Activated B cell treated with CpG ODN at 0.5 μM for 24 hours (primary cell): ENCODE measurements at regions of chr22 and their contacts with region 1.

Region 1: GRCh38 chr22:40044102-40044869 is 49.5 kb downstream of the FAM83F start:
- DNase-seq: peak; percentile 94
- ATAC-seq: peak; percentile 85
- H3K4me3 Mint-ChIP-seq: peak overlapping the region; percentile 90
- H3K27ac Mint-ChIP-seq: peak overlapping the region; percentile 99
- H3K4me1 Mint-ChIP-seq: peaks cover 48% of the 10 kb centered on the region
- H3K27me3 Mint-ChIP-seq: peaks cover 12% of the 10 kb centered on the region
- CTCF ChIP-seq: no peak

Region 2: GRCh38 chr22:38705235-38706100 is 1338.8 kb before region 1 on chr22 and contains the start of gene GTPBP1:
- CTCF ChIA-PET with region 1: no interaction called
- POLR2A ChIA-PET with region 1: interaction called, 3 read pairs
- intact Hi-C with region 1: loop called (anchors 10 kb)
- DNase-seq: peak; percentile 82
- ATAC-seq: peak; percentile 79
- H3K4me3 Mint-ChIP-seq: peak within 1 kb of the TSS; percentile 88
- H3K27ac Mint-ChIP-seq: peak within 1 kb of the TSS; percentile 85
- H3K4me1 Mint-ChIP-seq: peaks cover 69% of the 10 kb centered on the region
- H3K27me3 Mint-ChIP-seq: no peaks in the 10 kb centered on the region
- CTCF ChIP-seq: no peak
- total RNA-seq, gene GTPBP1: 90.6 and 103 TPM in 2 replicates

Region 3: GRCh38 chr22:39502109-39502788 is 542.0 kb before region 1 on chr22 and contains the start of gene MIEF1:
- CTCF ChIA-PET with region 1: no interaction called
- POLR2A ChIA-PET with region 1: interaction called, 12 read pairs
- intact Hi-C with region 1: no loop called
- DNase-seq: peak; percentile 89
- ATAC-seq: peak; percentile 96
- H3K4me3 Mint-ChIP-seq: peak within 1 kb of the TSS; percentile 95
- H3K27ac Mint-ChIP-seq: peak within 1 kb of the TSS; percentile 89
- H3K4me1 Mint-ChIP-seq: peaks cover 34% of the 10 kb centered on the region
- H3K27me3 Mint-ChIP-seq: no peaks in the 10 kb centered on the region
- CTCF ChIP-seq: no peak
- total RNA-seq, gene MIEF1: 38.2 and 41.3 TPM in 2 replicates

Region 4: GRCh38 chr22:39690881-39691605 is 353.2 kb before region 1 on chr22:
- CTCF ChIA-PET with region 1: no interaction called
- POLR2A ChIA-PET with region 1: no interaction called
- intact Hi-C with region 1: no loop called
- DNase-seq: no peak
- ATAC-seq: peak; percentile 25
- H3K4me3 Mint-ChIP-seq: peak overlapping the region; percentile 4
- H3K27ac Mint-ChIP-seq: no peak overlapping the region
- H3K4me1 Mint-ChIP-seq: peaks cover 12% of the 10 kb centered on the region
- H3K27me3 Mint-ChIP-seq: peaks cover 47% of the 10 kb centered on the region
- CTCF ChIP-seq: no peak

Region 5: GRCh38 chr22:39960791-39961746 is 83.2 kb before region 1 on chr22:
- CTCF ChIA-PET with region 1: no interaction called
- POLR2A ChIA-PET with region 1: no interaction called
- intact Hi-C with region 1: no loop called
- DNase-seq: no peak
- ATAC-seq: peak; percentile 70
- H3K4me3 Mint-ChIP-seq: no peak overlapping the region
- H3K27ac Mint-ChIP-seq: no peak overlapping the region
- H3K4me1 Mint-ChIP-seq: peaks cover 32% of the 10 kb centered on the region
- H3K27me3 Mint-ChIP-seq: peaks cover 10% of the 10 kb centered on the region
- CTCF ChIP-seq: no peak

Region 6: GRCh38 chr22:40009292-40009769 is 35.0 kb before region 1 on chr22:
- CTCF ChIA-PET with region 1: no interaction called
- POLR2A ChIA-PET with region 1: no interaction called
- intact Hi-C with region 1: no loop called
- DNase-seq: no peak
- ATAC-seq: no peak
- H3K4me3 Mint-ChIP-seq: no peak overlapping the region
- H3K27ac Mint-ChIP-seq: no peak overlapping the region
- H3K4me1 Mint-ChIP-seq: no peaks in the 10 kb centered on the region
- H3K27me3 Mint-ChIP-seq: peaks cover 51% of the 10 kb centered on the region
- CTCF ChIP-seq: no peak

Region 7: DNA sequence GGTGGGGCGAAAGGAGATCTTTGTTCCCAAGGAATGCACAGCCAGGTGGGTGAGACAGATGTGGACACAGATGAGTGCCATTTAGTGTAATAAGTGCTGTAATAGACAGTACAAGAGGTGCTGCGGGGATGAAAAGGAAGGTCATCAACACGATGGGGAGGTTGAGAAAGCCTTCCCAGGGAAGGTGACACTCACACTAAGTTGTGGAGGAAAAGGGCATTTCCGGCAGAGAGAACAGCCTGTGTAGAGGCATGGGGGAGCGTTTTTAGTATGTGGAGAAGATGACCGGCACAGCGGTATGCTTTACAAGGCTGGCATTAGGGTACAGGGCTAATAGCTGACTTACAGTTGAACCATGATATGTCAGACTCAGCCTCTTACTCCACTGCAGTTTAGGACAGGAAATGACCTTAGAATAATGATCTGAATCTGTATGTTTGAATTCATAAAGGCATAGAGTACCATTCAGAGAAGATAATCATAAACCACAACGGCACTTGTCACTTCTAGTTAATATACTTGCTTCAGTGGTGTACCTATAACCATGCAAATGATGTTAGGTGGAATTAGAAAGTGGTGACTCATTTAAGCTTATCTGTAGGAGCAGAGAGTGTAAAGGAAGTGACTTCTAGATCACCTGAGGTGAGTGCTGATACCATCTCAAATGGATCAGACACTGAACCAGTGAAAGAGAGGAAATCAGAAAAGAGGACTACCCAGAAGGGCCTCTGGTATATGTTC is 11.0 kb after region 1 on chr22:
- CTCF ChIA-PET with region 1: no interaction called
- POLR2A ChIA-PET with region 1: interaction called, 64 read pairs
- intact Hi-C with region 1: no loop called
- DNase-seq: no peak
- ATAC-seq: peak; percentile 84
- H3K4me3 Mint-ChIP-seq: peak overlapping the region; percentile 53
- H3K27ac Mint-ChIP-seq: peak overlapping the region; percentile 85
- H3K4me1 Mint-ChIP-seq: peaks cover 83% of the 10 kb centered on the region
- H3K27me3 Mint-ChIP-seq: no peaks in the 10 kb centered on the region
- CTCF ChIP-seq: no peak

Region 8: GRCh38 chr22:40107851-40108378 is 63.6 kb after region 1 on chr22:
- CTCF ChIA-PET with region 1: no interaction called
- POLR2A ChIA-PET with region 1: interaction called, 15 read pairs
- intact Hi-C with region 1: no loop called
- DNase-seq: no peak
- ATAC-seq: peak; percentile 49
- H3K4me3 Mint-ChIP-seq: peak overlapping the region; percentile 46
- H3K27ac Mint-ChIP-seq: peak overlapping the region; percentile 8
- H3K4me1 Mint-ChIP-seq: peaks cover 81% of the 10 kb centered on the region
- H3K27me3 Mint-ChIP-seq: no peaks in the 10 kb centered on the region
- CTCF ChIP-seq: no peak

Region 9: DNA sequence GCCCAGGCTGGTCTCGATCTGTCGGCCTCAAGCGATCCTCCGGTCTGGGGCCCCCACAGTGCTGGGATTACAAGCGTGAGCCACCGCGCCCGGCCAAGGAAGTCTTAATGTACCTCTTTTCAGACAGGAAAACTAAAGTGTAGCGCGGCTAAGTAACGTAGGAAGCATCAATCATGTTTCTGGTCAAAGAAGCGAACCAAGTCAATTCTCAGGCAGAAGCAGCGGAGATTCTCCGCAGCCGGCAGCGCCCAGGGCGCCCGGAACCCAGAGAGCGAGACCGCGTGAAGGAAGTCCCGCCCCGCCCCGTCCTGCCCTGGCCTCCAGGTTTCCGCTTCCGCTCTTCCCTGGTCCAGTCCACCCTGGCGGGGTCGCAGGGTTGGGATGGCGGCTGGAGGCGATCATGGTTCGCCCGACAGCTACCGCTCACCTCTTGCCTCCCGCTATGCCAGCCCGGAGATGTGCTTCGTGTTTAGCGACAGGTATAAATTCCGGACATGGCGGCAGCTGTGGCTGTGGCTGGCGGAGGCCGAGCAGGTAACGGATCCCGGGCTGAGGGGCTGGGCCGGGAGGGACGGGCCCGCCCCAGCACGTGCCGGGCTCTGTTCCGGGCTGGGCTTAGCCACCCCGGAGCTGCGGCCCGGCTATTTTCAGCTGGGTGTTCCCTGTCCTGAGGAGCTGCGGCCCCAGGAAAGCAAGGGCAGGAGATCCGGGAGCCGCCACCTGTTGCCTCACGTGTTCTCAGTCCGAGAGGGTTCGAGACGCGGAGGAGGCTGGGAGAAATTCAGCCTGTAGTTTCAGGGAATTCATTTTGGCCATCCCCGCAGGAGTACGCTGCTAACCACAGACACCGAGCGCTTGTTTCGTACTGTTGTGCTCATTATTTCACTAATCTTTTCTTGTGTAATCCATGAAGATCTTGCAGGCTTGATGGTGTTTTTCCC is 302.2 kb after region 1 on chr22 and contains the start of gene ADSL:
- CTCF ChIA-PET with region 1: interaction called, 3 read pairs
- POLR2A ChIA-PET with region 1: interaction called, 55 read pairs
- intact Hi-C with region 1: loop called (anchors 1 kb)
- DNase-seq: peak; percentile 85
- ATAC-seq: peak; percentile 91
- H3K4me3 Mint-ChIP-seq: peak within 1 kb of the TSS; percentile 98
- H3K27ac Mint-ChIP-seq: peak within 1 kb of the TSS; percentile 98
- H3K4me1 Mint-ChIP-seq: peaks cover 34% of the 10 kb centered on the region
- H3K27me3 Mint-ChIP-seq: no peaks in the 10 kb centered on the region
- CTCF ChIP-seq: no peak
- total RNA-seq, gene ADSL: 102 and 109 TPM in 2 replicates